ENCODE measurements at regions of chr9 and their contacts with region 1.

Region 1: DNA sequence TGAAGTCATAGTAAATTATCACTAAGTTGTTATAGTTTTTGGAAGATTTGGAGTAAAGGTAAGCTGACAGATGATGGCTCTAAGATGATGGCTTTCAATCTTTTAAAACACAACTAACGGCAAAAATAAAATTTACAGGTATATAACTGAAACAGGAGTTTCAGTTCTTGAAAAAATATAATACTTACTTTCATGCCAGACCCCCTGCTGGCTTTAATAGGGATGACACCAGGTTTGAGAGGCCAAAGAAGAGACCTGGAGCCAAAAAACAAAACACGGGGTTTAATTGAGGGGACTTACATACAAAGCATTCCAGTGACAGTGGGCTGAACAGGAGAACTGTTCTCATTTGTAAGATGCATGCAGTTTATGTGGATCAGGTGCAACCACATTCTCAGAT is 301.7 kb upstream of the PCSK5 start:
- DNase-seq: no peak
- ATAC-seq: no peak

Region 2: GRCh38 chr9:75265525-75265972 is 323.3 kb before region 1 on chr9:
- intact Hi-C with region 1: loop called (anchors 10 kb)
- DNase-seq: no peak
- ATAC-seq: no peak

Region 3: GRCh38 chr9:75505654-75506053 is 83.2 kb before region 1 on chr9:
- intact Hi-C with region 1: loop called (anchors 10 kb)
- DNase-seq: no peak
- ATAC-seq: no peak

Region 4: DNA sequence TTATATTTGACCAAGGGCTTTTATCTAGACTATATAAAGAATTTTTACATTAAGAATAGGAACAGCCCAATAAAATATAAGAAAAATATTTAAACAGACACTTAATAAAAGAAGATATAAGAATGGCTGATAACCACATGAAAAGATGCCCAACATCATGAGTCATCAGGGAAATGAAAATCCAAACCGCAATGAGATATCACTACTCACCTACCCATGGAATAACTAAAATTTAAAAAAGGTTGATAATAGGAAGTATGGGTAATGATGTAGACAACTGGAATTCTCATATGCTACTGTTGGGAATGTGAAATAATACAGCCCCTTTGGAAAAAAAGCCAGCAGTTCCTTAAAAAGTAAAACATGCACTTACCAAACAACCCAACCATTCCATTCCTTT is 94.8 kb after region 1 on chr9:
- intact Hi-C with region 1: no loop called
- DNase-seq: no peak
- ATAC-seq: no peak

Measured in Right ventricle myocardium inferior (tissue), 1 donor.